GM10248 (cell line): ENCODE measurements at regions of chr4 and their contacts with region 1.

Region 1: GRCh38 chr4:155787113-155787710 is 28.4 kb downstream of the GUCY1B1 start:
- DNase-seq: peak; percentile 53
- CTCF ChIP-seq: peak; percentile 83

Region 2: GRCh38 chr4:155442267-155443105 is 344.7 kb before region 1 on chr4:
- CTCF ChIA-PET with region 1: interaction called, 21 read pairs
- POLR2A ChIA-PET with region 1: no interaction called
- DNase-seq: peak; percentile 46
- CTCF ChIP-seq: peak; percentile 86

Region 3: DNA sequence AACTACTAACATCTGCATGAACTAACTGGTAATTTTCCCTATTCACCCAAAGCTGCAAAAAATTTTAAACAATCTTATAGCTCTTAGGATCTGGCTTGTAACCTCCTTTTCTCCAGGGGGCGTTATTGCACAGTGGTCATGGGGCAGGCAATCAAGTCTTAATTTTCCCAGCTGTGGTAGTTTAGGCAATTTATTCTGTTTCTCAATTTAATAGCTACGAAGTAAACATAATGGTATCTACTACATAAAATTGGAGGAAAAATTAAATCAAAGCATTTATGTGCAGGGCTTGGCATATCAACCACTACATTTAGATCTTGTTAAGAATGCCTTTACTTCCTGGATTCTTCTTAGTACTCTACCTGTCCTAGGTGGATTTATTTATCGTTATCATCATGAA is 257.9 kb before region 1 on chr4:
- CTCF ChIA-PET with region 1: interaction called, 17 read pairs
- POLR2A ChIA-PET with region 1: no interaction called
- DNase-seq: peak; percentile 17
- CTCF ChIP-seq: peak; percentile 24

Region 4: GRCh38 chr4:155769090-155769489 is 18.1 kb before region 1 on chr4:
- CTCF ChIA-PET with region 1: interaction called, 18 read pairs
- POLR2A ChIA-PET with region 1: no interaction called
- DNase-seq: no peak
- CTCF ChIP-seq: no peak